ENCODE measurements at regions of chr7 and their contacts with region 1.

Region 1: GRCh38 chr7:50632561-50633413 is 67.6 kb upstream of the DDC start:
- DNase-seq: peak; percentile 74
- ATAC-seq: peak; percentile 86
- H3K4me3 Mint-ChIP-seq: no peak overlapping the region
- H3K27ac Mint-ChIP-seq: peak overlapping the region; percentile 48
- H3K4me1 Mint-ChIP-seq: peaks cover 9% of the 10 kb centered on the region
- H3K27me3 Mint-ChIP-seq: peaks cover 39% of the 10 kb centered on the region

Region 2: GRCh38 chr7:50595491-50596102 is 37.2 kb before region 1 on chr7:
- CTCF ChIA-PET with region 1: interaction called, 23 read pairs
- DNase-seq: no peak
- ATAC-seq: peak; percentile 67
- H3K4me3 Mint-ChIP-seq: peak overlapping the region; percentile 23
- H3K27ac Mint-ChIP-seq: peak overlapping the region; percentile 89
- H3K4me1 Mint-ChIP-seq: peaks cover 53% of the 10 kb centered on the region
- H3K27me3 Mint-ChIP-seq: peaks cover 4% of the 10 kb centered on the region

Region 3: GRCh38 chr7:50608196-50608906 is 24.4 kb before region 1 on chr7:
- CTCF ChIA-PET with region 1: interaction called, 15 read pairs
- DNase-seq: peak; percentile 37
- ATAC-seq: peak; percentile 73
- H3K4me3 Mint-ChIP-seq: peak overlapping the region; percentile 46
- H3K27ac Mint-ChIP-seq: peak overlapping the region; percentile 78
- H3K4me1 Mint-ChIP-seq: peaks cover 42% of the 10 kb centered on the region
- H3K27me3 Mint-ChIP-seq: peaks cover 19% of the 10 kb centered on the region

Region 4: DNA sequence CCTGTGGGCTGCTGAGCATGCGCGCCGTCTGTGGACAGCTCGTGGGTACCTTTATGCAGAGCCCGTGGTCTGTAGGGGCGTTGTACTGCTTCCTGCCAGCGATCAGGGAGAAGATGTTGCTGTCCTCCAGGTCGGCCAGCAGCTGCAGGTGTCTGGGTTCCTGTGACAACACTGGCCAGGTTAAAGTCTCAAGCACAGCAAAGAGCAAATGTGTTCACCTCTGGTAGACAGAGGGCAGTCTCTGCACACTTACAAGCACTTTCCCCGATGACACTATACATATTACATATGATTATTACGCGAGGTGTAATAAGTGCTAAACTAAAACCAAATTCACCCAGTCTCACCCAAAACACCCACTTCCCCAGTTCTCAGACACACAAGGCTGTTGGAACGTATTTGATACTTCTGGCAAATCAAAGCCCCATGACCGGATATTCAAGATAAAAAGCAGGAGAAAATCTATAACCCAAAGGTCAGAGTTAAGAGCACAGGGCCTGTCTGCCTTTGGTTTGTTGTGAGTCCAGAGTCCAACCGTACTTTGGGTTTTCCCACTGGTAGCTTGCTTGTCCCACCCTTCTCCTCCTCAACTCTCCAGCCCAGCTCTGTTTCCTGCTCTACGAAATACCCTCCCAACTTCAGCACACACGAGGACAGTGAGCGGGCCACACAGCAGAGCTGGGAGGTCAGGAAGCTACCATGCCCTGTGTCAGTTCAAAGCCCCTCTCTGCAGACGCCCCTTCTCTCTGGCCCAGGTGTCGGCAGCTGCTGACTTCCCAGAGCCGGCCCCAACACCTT is 17.9 kb before region 1 on chr7:
- CTCF ChIA-PET with region 1: interaction called, 48 read pairs
- DNase-seq: peak; percentile 55
- ATAC-seq: peak; percentile 54
- H3K4me3 Mint-ChIP-seq: no peak overlapping the region
- H3K27ac Mint-ChIP-seq: no peak overlapping the region
- H3K4me1 Mint-ChIP-seq: peaks cover 35% of the 10 kb centered on the region
- H3K27me3 Mint-ChIP-seq: peaks cover 39% of the 10 kb centered on the region

Region 5: DNA sequence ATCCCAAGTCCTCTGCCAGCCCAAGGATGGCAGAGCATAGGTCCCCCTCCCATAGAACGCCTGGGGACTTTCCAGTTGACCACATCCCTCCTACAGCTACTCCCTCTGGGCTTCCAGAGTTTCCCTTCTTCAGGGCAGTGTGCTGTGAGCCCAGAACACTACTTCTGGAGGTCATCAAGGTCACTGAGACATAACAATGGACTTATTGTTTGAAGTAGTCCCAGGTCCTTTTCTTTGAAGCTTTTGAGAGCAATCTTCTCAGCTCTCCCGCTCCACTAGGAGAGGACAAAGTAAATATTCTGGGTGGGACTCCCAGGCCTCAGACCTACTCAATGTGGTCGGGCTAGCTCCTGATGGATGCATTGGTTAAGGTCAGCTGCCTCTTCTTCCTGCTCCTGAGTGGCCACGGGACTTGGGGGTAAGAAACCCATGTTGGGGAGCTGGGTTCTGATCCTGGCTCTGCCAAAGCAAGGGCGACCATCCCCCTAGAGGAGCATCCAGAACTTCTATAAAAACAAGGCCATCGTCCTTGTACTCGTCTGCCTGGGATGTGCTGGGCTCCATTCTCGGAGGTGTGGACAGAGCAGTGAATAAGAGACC is 15.9 kb after region 1 on chr7:
- CTCF ChIA-PET with region 1: interaction called, 13 read pairs
- DNase-seq: no peak
- ATAC-seq: no peak
- H3K4me3 Mint-ChIP-seq: no peak overlapping the region
- H3K27ac Mint-ChIP-seq: no peak overlapping the region
- H3K4me1 Mint-ChIP-seq: peaks cover 17% of the 10 kb centered on the region
- H3K27me3 Mint-ChIP-seq: peaks cover 6% of the 10 kb centered on the region

Region 6: DNA sequence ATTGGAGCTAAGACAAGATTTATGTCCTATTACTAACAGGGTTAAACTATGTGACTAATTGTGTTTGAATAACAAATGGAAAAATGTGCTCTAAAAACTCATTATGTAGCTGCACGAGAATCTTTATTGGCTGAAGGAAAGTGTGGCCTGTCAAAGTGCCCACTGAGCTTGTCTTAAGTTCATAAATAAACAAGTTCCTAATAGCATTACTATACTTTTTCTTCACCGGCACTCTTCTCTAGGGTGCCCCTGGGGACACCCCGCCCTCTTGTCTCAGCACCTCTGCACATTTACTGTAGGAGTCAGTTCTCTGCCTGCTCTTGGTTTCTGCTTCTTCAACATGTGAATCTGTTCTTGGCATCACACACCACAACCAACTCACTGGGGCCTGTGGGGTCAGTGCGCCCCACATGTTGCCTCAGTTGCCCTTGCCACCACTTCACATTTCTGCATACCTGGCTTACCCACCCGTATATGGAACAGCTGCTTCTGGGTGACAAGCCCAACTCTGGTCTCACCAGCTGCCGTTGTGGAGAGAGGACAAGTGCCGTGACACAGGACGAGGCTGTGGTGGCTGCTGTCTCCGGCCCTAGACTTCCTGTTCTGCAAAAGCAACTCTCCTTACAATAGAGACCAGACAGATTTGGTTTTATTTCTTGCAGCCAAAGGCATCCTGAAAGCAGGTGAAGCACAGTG is 28.7 kb after region 1 on chr7:
- CTCF ChIA-PET with region 1: interaction called, 10 read pairs
- DNase-seq: peak; percentile 83
- ATAC-seq: peak; percentile 35
- H3K4me3 Mint-ChIP-seq: peak overlapping the region; percentile 74
- H3K27ac Mint-ChIP-seq: peak overlapping the region; percentile 99
- H3K4me1 Mint-ChIP-seq: peaks cover 86% of the 10 kb centered on the region
- H3K27me3 Mint-ChIP-seq: no peaks in the 10 kb centered on the region